Activated CD4-positive, alpha-beta T cell treated with anti-CD3 and anti-CD28 coated beads, Interleukin-2, amount 10 ng/mL, durations not matched to agents 24 days and 14 days (primary cell): ENCODE measurements at regions of chr13 and their contacts with region 1.

Region 1: DNA sequence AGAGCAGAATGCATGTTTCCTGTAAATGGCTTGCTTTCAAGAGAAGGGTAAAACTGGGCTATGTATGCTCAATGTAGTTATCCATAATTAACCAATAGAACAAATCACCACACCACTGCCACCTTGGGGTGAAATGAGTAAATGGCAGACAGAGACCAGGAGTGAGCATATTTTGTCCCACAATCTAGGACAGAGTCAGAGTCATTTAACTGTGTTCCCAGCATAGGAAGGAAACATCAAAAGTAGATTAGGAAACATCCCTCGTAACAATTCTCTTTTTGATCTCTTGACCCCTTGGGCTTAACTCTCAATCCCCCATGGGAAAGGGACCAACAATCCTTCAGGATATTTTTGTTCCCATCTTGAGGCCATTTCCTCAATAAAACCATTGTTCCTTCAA is 224.8 kb downstream of the NHLRC3 start:
- DNase-seq: peak; percentile 80
- H3K4me3 Mint-ChIP-seq: no peak overlapping the region
- H3K27ac Mint-ChIP-seq: no peak overlapping the region
- H3K4me1 Mint-ChIP-seq: peaks cover 12% of the 10 kb centered on the region
- H3K27me3 Mint-ChIP-seq: peaks cover 5% of the 10 kb centered on the region

Region 2: DNA sequence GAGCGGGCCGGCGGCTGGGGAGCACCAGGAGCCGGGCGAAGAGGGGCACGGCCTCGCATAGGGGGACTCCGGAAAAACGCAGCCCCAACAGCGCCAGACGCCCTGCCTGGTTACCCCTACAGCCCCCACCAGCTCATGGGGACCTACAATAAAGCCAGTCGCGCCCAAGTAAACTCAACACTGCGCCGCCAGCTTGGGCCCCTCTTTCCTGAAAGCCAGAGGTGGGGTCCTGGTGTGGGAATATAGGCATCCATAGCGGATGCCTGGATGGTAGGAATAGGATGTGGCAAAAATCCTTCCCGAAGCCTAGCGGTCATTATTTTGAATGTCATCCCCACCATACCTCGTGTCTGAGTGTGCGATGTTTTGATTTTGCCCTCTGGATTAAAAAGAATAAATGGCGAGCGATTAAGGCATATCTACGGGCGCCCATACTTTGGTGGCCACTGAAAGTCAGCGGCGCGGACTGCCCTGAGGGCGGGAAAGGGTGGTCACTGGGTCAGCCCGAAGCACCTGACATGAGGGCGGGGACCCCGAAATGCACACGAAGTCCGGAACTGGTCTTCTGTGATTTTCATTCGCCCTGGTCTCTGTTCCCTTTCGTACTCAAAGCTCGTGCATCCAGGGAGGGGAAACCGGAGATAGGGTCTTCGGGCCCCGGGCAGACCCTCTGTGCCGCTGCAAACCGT is 225.0 kb before region 1 on chr13 and contains the starts of genes NHLRC3 and PROSER1:
- intact Hi-C with region 1: loop called (anchors 5 kb)
- DNase-seq: peak; percentile 94
- H3K4me3 Mint-ChIP-seq: peak within 1 kb of the TSS; percentile 91
- H3K27ac Mint-ChIP-seq: peak within 1 kb of the TSS; percentile 95
- H3K4me1 Mint-ChIP-seq: peaks cover 48% of the 10 kb centered on the region
- H3K27me3 Mint-ChIP-seq: no peaks in the 10 kb centered on the region
- total RNA-seq, gene NHLRC3: 18.4 and 18.8 TPM in 2 replicates
- total RNA-seq, gene PROSER1: 86.6 and 89.8 TPM in 2 replicates

Region 3: GRCh38 chr13:39051157-39051556 is 211.9 kb before region 1 on chr13:
- intact Hi-C with region 1: loop called (anchors 1 kb)
- DNase-seq: no peak
- H3K4me3 Mint-ChIP-seq: no peak overlapping the region
- H3K27ac Mint-ChIP-seq: no peak overlapping the region
- H3K4me1 Mint-ChIP-seq: peaks cover 2% of the 10 kb centered on the region
- H3K27me3 Mint-ChIP-seq: no peaks in the 10 kb centered on the region

Region 4: GRCh38 chr13:39132286-39133230 is 130.5 kb before region 1 on chr13:
- intact Hi-C with region 1: no loop called
- DNase-seq: no peak
- H3K4me3 Mint-ChIP-seq: no peak overlapping the region
- H3K27ac Mint-ChIP-seq: no peak overlapping the region
- H3K4me1 Mint-ChIP-seq: no peaks in the 10 kb centered on the region
- H3K27me3 Mint-ChIP-seq: peaks cover 7% of the 10 kb centered on the region

Region 5: GRCh38 chr13:39144941-39145533 is 118.0 kb before region 1 on chr13:
- intact Hi-C with region 1: loop called (anchors 1 kb)
- DNase-seq: peak; percentile 70
- H3K4me3 Mint-ChIP-seq: no peak overlapping the region
- H3K27ac Mint-ChIP-seq: no peak overlapping the region
- H3K4me1 Mint-ChIP-seq: peaks cover 14% of the 10 kb centered on the region
- H3K27me3 Mint-ChIP-seq: peaks cover 26% of the 10 kb centered on the region

Region 6: DNA sequence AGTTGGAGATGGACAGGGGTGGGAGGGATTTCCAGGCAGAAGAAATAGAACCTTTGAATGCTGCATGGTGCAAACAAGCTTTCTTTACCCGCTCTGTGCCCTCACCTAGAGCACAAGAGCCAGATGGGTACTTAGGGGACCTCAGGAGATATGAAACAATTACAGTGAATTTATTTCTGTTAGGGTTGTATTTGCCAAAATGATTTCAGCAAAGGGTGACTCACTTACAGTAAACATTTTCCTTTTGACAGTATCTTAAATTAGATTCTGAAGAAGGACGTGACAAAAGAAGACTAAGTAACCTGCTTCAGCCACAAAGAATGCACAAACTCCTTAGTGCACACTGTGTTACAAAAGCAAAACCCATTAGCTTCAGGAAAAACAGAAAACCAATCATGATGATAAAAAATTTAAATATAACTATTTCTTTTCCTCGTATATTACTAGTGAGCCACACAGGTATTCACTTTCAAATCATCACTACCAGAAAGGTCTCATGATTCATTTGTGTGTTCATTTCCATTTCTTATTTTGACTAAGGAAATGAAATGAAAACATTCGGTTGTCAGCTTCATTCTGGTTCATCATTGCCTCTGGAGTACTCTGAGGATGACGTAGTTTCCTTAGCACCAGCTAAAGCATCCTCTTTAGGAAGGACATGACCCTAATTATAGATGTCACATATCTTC is 65.9 kb before region 1 on chr13:
- intact Hi-C with region 1: loop called (anchors 1 kb)
- DNase-seq: no peak
- H3K4me3 Mint-ChIP-seq: peak overlapping the region; percentile 36
- H3K27ac Mint-ChIP-seq: peak overlapping the region; percentile 87
- H3K4me1 Mint-ChIP-seq: peaks cover 9% of the 10 kb centered on the region
- H3K27me3 Mint-ChIP-seq: peaks cover 9% of the 10 kb centered on the region

Region 7: GRCh38 chr13:39226359-39226758 is 36.7 kb before region 1 on chr13:
- intact Hi-C with region 1: no loop called
- DNase-seq: no peak
- H3K4me3 Mint-ChIP-seq: no peak overlapping the region
- H3K27ac Mint-ChIP-seq: no peak overlapping the region
- H3K4me1 Mint-ChIP-seq: no peaks in the 10 kb centered on the region
- H3K27me3 Mint-ChIP-seq: peaks cover 14% of the 10 kb centered on the region

Region 8: DNA sequence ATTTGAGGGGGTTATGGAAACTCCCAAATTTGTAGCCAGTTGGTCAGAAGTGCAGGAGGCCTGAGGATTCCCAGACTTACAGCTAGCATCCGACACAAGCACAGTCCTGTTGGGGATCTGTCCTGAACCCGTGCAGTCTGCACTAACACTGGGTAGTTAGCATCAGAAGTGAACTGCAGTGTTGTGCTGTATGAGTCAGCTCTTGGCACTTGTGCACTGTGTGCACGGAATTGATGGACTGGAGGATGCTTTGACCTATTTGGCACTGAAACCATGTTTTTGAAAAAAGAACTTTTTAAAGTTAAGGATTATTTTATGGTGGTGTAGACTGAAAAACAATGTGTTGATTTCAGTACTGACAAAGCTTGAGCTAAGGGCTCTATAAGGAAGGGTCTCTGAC is 54.3 kb after region 1 on chr13:
- intact Hi-C with region 1: no loop called
- DNase-seq: no peak
- H3K4me3 Mint-ChIP-seq: no peak overlapping the region
- H3K27ac Mint-ChIP-seq: no peak overlapping the region
- H3K4me1 Mint-ChIP-seq: no peaks in the 10 kb centered on the region
- H3K27me3 Mint-ChIP-seq: no peaks in the 10 kb centered on the region

Region 9: DNA sequence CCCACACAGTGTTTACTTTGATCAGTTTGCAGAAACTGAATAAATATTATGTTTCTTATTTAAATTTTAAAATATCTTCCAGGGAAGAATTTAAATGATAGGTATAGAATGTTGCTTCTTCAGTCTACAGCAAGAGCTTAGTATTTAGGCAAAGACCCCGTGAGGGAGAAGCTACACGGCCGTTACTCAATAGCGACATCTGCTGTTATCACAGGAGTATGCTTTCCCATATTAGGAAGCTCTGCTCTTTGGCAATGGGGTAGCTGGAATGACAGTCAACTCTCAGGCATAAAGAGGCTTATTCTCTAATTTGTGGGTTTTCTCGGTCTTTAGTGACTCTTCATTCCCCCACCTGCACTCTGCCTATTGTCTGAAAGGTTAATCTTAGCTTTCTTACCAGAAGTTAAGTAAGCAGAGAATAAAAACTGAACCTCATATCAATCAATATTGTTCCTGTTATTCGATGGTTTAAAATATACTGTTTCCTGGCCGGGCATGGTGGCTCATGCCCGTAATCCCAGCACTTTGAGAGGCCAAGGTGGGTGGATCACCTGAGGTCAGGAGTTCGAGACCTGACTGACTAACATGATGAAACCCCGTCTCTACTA is 353.2 kb after region 1 on chr13:
- intact Hi-C with region 1: loop called (anchors 5 kb)
- DNase-seq: peak; percentile 81
- H3K4me3 Mint-ChIP-seq: no peak overlapping the region
- H3K27ac Mint-ChIP-seq: no peak overlapping the region
- H3K4me1 Mint-ChIP-seq: no peaks in the 10 kb centered on the region
- H3K27me3 Mint-ChIP-seq: peaks cover 24% of the 10 kb centered on the region

Region 10: GRCh38 chr13:39676315-39676876 is 413.4 kb after region 1 on chr13:
- intact Hi-C with region 1: loop called (anchors 10 kb)
- DNase-seq: peak; percentile 73
- H3K4me3 Mint-ChIP-seq: no peak overlapping the region
- H3K27ac Mint-ChIP-seq: no peak overlapping the region
- H3K4me1 Mint-ChIP-seq: no peaks in the 10 kb centered on the region
- H3K27me3 Mint-ChIP-seq: no peaks in the 10 kb centered on the region